CD8-positive, alpha-beta memory T cell (primary cell): ENCODE measurements at regions of chr4 and their contacts with region 1.

Region 1: DNA sequence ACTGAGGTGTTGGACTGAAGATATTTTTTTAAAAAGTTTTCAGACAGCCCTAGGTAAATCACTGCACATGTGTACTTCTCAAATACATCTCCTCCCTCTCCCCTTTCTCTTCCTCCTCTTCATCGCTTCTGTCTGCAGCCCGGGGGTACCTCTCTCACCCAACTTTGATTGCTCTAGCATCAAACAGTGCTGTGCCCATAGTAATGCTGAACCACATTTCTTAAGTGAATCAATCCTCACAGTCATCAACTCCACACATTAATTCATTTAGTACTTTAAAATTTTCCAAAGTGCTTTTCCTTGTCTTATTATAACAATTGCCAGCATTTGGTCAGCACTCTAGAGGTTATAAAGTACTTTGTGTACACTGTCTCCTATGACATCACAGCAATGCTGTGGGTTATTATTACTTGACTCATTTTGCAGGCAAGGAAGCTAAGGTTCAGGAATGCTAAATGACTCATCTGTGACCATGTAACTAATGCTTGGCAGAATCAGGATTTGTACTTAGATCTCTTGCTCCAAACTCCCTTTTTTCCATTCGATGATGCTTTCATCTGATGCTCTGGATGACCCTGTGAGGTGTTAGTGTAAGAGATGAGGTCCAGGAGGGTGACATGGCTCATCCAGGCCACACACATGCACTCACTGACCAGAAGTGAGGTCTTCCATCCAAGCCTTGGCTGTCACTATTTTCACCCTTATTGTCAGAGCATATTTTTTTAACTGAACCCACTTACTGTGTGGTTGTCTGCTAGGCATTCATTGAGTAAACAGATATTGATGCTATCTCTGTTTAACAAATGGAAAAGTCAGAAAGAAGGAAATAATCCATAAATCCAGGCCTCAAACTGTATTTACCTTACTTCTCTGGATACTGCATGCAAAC is 58.8 kb downstream of the RHOH start:
- DNase-seq: no peak
- H3K4me3 ChIP-seq: peak overlapping the region; percentile 1
- H3K4me3 Mint-ChIP-seq: peak overlapping the region in 5 of 7 donors; percentile 3 to 67 (median 55)
- H3K27ac ChIP-seq: no peak overlapping the region
- H3K27ac Mint-ChIP-seq: peak overlapping the region; percentile 48 to 94 (median 82)
- H3K4me1 ChIP-seq: peaks cover 71% of the 10 kb centered on the region
- H3K4me1 Mint-ChIP-seq: peaks cover 41 to 77% (median 46%) of the 10 kb centered on the region in 3 donors
- H3K27me3 ChIP-seq: no peaks in the 10 kb centered on the region
- H3K27me3 Mint-ChIP-seq: no peaks in the 10 kb centered on the region

Region 2: DNA sequence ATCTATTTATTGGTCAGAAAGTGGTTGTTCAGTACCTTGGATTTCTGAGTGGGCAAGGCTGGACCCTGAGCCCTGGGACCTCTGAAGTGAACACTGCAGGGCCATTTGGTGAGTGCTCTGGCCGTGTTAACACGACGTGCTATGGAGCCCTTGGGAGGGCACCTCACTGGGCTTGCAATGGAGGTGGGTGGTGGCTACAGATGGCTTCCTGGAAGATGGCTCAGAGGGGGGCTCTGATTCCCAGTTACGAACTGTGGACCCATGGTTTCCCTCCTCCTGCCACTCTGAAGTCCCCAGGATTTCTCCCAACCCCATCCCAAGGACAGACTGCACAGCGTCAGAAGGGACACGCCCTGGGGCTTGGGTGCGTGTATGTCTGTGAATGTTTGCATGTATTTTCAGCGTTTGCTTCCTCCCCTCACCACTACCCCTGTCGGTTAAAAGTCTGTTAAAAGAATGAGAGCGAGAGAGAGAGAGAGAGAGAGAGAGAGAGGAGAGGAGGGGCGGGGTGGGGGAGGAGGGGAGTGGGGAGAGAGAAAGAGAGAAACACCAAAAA is 62.5 kb before region 1 on chr4:
- CTCF ChIA-PET with region 1: interaction called, 4 read pairs
- POLR2A ChIA-PET with region 1: interaction called, 20 read pairs
- DNase-seq: peak in 2 of 5 donors; percentile 66 to 75
- H3K4me3 ChIP-seq: peak overlapping the region; percentile 63
- H3K4me3 Mint-ChIP-seq: peak overlapping the region; percentile 73 to 98 (median 82)
- H3K27ac ChIP-seq: peak overlapping the region; percentile 22
- H3K27ac Mint-ChIP-seq: peak overlapping the region; percentile 93 to 100 (median 99)
- H3K4me1 ChIP-seq: peaks cover 51% of the 10 kb centered on the region
- H3K4me1 Mint-ChIP-seq: peaks cover 48 to 80% (median 62%) of the 10 kb centered on the region in 3 donors
- H3K27me3 ChIP-seq: no peaks in the 10 kb centered on the region
- H3K27me3 Mint-ChIP-seq: no peaks in the 10 kb centered on the region

Region 3: GRCh38 chr4:40340030-40340429 is 84.4 kb after region 1 on chr4:
- CTCF ChIA-PET with region 1: no interaction called
- POLR2A ChIA-PET with region 1: no interaction called
- DNase-seq: no peak
- H3K4me3 ChIP-seq: no peak overlapping the region
- H3K4me3 Mint-ChIP-seq: no peak overlapping the region
- H3K27ac ChIP-seq: no peak overlapping the region
- H3K27ac Mint-ChIP-seq: no peak overlapping the region
- H3K4me1 ChIP-seq: no peaks in the 10 kb centered on the region
- H3K4me1 Mint-ChIP-seq: no peaks in the 10 kb centered on the region
- H3K27me3 ChIP-seq: no peaks in the 10 kb centered on the region
- H3K27me3 Mint-ChIP-seq: peaks cover 0 to 10% of the 10 kb centered on the region in 2 donors